ENCODE measurements at regions of chr21 and their contacts with region 1.

Region 1: GRCh38 chr21:14120091-14120734 is 90.5 kb downstream of the LIPI start:
- DNase-seq: peak; percentile 42
- CTCF ChIP-seq: peak; percentile 91

Region 2: GRCh38 chr21:14092834-14093560 is 27.2 kb before region 1 on chr21:
- CTCF ChIA-PET with region 1: interaction called, 21 read pairs
- POLR2A ChIA-PET with region 1: no interaction called
- DNase-seq: no peak
- CTCF ChIP-seq: no peak

Region 3: DNA sequence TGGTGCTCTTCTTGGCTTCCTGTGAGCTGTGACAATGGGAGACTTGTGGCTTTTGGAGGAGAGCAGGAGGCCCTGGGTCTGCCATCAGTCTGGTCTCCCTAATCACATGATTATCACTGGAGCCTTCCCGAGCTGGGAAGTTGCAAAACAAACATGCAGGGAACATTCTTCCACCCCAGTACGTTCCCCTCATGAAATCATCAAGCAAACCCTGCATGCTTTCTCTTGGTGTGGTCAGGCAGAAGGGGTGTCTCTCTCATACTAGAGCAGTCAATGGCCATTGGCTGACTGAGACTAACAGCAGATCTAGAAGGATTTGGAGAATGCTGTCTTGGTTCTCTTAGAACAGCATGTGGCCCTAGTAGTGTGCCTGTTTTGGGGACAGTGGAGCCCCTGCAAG is 20.6 kb before region 1 on chr21:
- CTCF ChIA-PET with region 1: interaction called, 21 read pairs
- POLR2A ChIA-PET with region 1: no interaction called
- DNase-seq: no peak
- CTCF ChIP-seq: no peak

Region 4: DNA sequence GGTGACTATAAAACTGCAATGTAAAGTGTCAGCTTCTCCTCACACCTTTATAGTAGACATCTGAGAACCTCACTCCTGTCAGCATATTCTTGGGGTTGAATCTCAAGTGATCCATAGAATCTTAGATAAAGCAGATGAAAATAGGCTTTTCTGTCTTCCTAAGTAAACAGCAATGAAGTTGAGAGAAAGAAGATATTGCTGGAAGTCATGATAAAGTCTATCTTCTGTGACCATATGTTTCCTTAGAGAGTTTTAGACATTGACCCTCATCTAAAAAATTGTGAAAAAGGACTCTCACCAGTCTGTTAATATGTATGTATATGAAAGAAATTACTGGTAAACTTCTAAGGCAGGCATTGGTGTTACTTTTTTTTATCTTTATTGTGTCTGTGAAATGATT is 23.8 kb after region 1 on chr21:
- CTCF ChIA-PET with region 1: no interaction called
- POLR2A ChIA-PET with region 1: no interaction called
- DNase-seq: no peak
- CTCF ChIP-seq: no peak

Measured in GM10248 (cell line).